ENCODE measurements at regions of chr19 and their contacts with region 1.

Region 1: DNA sequence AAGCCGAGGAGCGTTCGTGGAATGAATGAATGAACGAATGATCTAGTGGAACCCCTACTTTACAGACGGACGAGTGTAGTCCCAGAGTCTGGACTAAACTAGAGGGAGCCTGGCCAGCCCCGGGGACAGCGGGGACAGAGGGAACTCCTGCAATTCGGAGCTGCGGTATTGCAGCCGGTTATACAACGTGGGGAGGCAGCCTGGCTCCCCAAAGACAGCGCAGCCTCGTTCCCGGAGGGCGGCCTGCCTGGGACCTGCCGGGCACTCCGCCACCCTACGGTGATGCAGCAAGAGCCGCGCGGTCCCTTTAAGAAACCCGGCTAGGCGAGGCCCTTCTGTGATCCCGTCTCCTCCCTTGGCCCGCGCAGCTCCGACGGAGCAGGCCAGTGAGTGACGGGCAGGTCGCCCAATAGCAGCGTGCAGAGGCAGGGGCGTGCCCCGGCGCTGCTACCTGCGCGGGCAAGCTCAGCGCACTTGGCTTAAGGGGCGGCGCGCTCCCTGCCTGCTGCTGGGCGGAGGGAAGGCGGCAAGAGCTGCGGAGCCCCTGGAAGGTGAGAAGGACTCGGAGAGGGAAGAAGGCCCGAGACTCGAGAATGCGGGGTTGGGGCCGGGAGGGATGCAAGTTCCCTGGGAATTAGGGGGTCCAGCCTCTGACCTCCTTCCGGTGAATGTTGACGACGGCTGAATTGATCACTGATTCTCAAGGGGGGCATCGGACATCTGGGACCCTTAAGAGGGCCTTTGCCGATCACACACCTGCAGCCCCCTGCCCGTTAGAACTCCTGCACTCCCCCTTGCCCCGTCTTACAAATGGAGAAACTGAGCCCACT is at the start of gene ABCA7:
- DNase-seq: peak; percentile 98
- ATAC-seq: peak; percentile 78
- H3K4me3 ChIP-seq: peak within 1 kb of the TSS; percentile 69 to 90 (median 75)
- H3K4me3 Mint-ChIP-seq: peak within 1 kb of the TSS; percentile 97
- H3K27ac ChIP-seq: peak within 1 kb of the TSS; percentile 81 to 92
- H3K27ac Mint-ChIP-seq: peak within 1 kb of the TSS; percentile 99
- H3K4me1 ChIP-seq: peaks cover 39 to 66% of the 10 kb centered on the region in 2 donors
- H3K4me1 Mint-ChIP-seq: peaks cover 51% of the 10 kb centered on the region
- H3K27me3 ChIP-seq: no peaks in the 10 kb centered on the region
- H3K27me3 Mint-ChIP-seq: no peaks in the 10 kb centered on the region
- CTCF ChIP-seq: no peak
- total RNA-seq, gene ABCA7: 192 and 206 TPM in 2 replicates

Region 2: GRCh38 chr19:883661-884211 is 156.1 kb before region 1 on chr19:
- CTCF ChIA-PET with region 1: no interaction called
- POLR2A ChIA-PET with region 1: no interaction called
- intact Hi-C with region 1: no loop called
- DNase-seq: no peak
- ATAC-seq: peak; percentile 36
- H3K4me3 ChIP-seq: no peak overlapping the region
- H3K4me3 Mint-ChIP-seq: no peak overlapping the region
- H3K27ac ChIP-seq: no peak overlapping the region
- H3K27ac Mint-ChIP-seq: no peak overlapping the region
- H3K4me1 ChIP-seq: peaks cover 0 to 11% of the 10 kb centered on the region in 2 donors
- H3K4me1 Mint-ChIP-seq: no peaks in the 10 kb centered on the region
- H3K27me3 ChIP-seq: no peaks in the 10 kb centered on the region
- H3K27me3 Mint-ChIP-seq: no peaks in the 10 kb centered on the region
- CTCF ChIP-seq: no peak

Region 3: GRCh38 chr19:932402-933215 is 107.3 kb before region 1 on chr19:
- CTCF ChIA-PET with region 1: no interaction called
- POLR2A ChIA-PET with region 1: no interaction called
- intact Hi-C with region 1: no loop called
- DNase-seq: peak; percentile 66
- ATAC-seq: peak; percentile 22
- H3K4me3 ChIP-seq: peak overlapping the region in 1 of 5 experiments; percentile 28
- H3K4me3 Mint-ChIP-seq: peak overlapping the region; percentile 70
- H3K27ac ChIP-seq: peak overlapping the region in 1 of 2 donors; percentile 56
- H3K27ac Mint-ChIP-seq: peak overlapping the region; percentile 84
- H3K4me1 ChIP-seq: peaks cover 24 to 47% of the 10 kb centered on the region in 2 donors
- H3K4me1 Mint-ChIP-seq: peaks cover 32% of the 10 kb centered on the region
- H3K27me3 ChIP-seq: no peaks in the 10 kb centered on the region
- H3K27me3 Mint-ChIP-seq: no peaks in the 10 kb centered on the region
- CTCF ChIP-seq: no peak

Region 4: DNA sequence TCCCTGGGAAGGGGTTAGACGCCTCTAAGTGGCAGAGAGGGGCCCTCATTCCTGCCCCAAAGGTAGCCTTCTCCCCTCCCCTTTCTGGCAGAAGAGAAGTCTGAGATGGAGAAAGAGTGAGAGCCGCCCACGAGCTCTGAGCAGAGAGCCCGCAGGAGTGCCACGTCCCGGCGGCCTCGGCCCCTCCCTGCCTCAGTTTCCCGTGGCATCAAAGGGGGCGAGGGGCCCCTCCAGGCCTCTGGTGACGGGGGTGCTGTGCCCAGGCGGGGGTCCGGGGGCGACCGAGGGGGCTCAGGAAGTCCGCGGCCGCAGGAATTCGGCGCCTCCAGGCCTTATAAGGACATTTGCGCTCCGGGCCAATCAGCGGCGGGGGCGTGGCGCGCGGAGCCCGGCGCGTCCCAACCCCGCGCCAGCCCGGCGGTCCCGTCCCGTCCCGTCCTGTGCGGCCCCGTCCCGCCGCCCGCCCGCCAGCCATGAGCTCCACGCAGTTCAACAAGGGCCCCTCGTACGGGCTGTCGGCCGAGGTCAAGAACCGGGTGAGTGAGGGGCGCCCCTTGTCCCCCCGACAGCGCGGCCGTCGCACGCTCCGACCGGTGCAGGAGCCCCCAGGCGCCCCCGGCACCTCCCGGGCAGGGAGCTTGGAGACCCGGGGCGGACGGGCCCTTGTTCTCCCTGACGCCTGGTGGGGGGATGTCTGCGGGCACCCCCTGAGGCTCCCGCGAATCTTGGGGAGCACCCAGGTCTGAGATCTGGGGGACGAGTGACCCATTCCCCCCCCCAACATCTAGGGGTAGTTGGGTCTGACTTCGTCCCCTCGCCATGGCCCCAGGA is 13.5 kb before region 1 on chr19 and contains the start of gene CNN2:
- CTCF ChIA-PET with region 1: interaction called, 20 read pairs
- POLR2A ChIA-PET with region 1: interaction called, 91 read pairs
- intact Hi-C with region 1: loop called (anchors 1 kb)
- DNase-seq: peak; percentile 81
- ATAC-seq: peak; percentile 57
- H3K4me3 ChIP-seq: peak within 1 kb of the TSS; percentile 60 to 99 (median 87)
- H3K4me3 Mint-ChIP-seq: peak within 1 kb of the TSS; percentile 94
- H3K27ac ChIP-seq: peak within 1 kb of the TSS; percentile 74 to 85
- H3K27ac Mint-ChIP-seq: peak within 1 kb of the TSS; percentile 91
- H3K4me1 ChIP-seq: peaks cover 16 to 37% of the 10 kb centered on the region in 2 donors
- H3K4me1 Mint-ChIP-seq: peaks cover 27% of the 10 kb centered on the region
- H3K27me3 ChIP-seq: no peaks in the 10 kb centered on the region
- H3K27me3 Mint-ChIP-seq: no peaks in the 10 kb centered on the region
- CTCF ChIP-seq: no peak
- total RNA-seq, gene CNN2: 186 and 198 TPM in 2 replicates

Region 5: DNA sequence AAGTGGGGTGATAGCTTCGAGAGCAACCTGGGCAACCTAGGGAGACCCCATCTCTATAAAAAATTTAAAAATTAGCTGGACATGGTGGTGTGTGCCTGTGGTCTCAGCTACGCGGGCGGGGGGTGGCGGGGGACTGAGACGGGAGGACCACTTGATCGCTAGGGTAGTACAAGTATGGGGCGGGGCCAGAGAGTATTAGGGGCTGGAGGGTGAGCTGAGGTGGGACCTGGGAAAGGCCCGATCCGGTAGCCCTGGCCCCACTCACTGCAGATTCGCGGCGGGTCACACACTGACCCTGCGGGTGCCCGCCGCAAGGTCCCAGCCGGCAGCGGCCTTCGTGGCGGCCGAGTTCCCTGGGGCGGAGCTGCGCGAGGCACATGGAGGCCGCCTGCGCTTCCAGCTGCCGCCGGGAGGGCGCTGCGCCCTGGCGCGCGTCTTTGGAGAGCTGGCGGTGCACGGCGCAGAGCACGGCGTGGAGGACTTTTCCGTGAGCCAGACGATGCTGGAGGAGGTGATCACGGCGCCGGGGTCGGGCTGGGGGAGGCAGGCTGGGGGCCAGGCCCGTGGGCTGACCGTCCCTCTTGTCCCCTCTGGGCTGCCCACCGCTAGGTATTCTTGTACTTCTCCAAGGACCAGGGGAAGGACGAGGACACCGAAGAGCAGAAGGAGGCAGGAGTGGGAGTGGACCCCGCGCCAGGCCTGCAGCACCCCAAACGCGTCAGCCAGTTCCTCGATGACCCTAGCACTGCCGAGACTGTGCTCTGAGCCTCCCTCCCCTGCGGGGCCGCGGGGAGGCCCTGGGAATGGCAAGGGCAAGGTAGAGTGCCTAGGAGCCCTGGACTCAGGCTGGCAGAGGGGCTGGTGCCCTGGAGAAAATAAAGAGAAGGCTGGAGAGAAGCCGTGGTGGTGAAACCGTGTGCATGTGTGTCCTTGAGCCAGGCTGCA is 25.1 kb after region 1 on chr19:
- CTCF ChIA-PET with region 1: interaction called, 35 read pairs
- POLR2A ChIA-PET with region 1: interaction called, 32 read pairs
- intact Hi-C with region 1: loop called (anchors 2 kb)
- DNase-seq: peak; percentile 83
- ATAC-seq: peak; percentile 19
- H3K4me3 ChIP-seq: no peak overlapping the region
- H3K4me3 Mint-ChIP-seq: peak overlapping the region; percentile 79
- H3K27ac ChIP-seq: no peak overlapping the region
- H3K27ac Mint-ChIP-seq: peak overlapping the region; percentile 83
- H3K4me1 ChIP-seq: peaks cover 38 to 53% of the 10 kb centered on the region in 2 donors
- H3K4me1 Mint-ChIP-seq: peaks cover 33% of the 10 kb centered on the region
- H3K27me3 ChIP-seq: no peaks in the 10 kb centered on the region
- H3K27me3 Mint-ChIP-seq: no peaks in the 10 kb centered on the region
- CTCF ChIP-seq: peak; percentile 78

Region 6: GRCh38 chr19:1074544-1075283 is 34.9 kb after region 1 on chr19:
- CTCF ChIA-PET with region 1: interaction called, 8 read pairs
- POLR2A ChIA-PET with region 1: interaction called, 29 read pairs
- intact Hi-C with region 1: loop called (anchors 2 kb)
- DNase-seq: peak; percentile 93
- ATAC-seq: peak; percentile 53
- H3K4me3 ChIP-seq: peak overlapping the region in 1 of 5 experiments; percentile 35
- H3K4me3 Mint-ChIP-seq: peak overlapping the region; percentile 66
- H3K27ac ChIP-seq: peak overlapping the region; percentile 7 to 19
- H3K27ac Mint-ChIP-seq: peak overlapping the region; percentile 91
- H3K4me1 ChIP-seq: peaks cover 65 to 90% of the 10 kb centered on the region in 2 donors
- H3K4me1 Mint-ChIP-seq: peaks cover 48% of the 10 kb centered on the region
- H3K27me3 ChIP-seq: no peaks in the 10 kb centered on the region
- H3K27me3 Mint-ChIP-seq: no peaks in the 10 kb centered on the region
- CTCF ChIP-seq: no peak

Region 7: DNA sequence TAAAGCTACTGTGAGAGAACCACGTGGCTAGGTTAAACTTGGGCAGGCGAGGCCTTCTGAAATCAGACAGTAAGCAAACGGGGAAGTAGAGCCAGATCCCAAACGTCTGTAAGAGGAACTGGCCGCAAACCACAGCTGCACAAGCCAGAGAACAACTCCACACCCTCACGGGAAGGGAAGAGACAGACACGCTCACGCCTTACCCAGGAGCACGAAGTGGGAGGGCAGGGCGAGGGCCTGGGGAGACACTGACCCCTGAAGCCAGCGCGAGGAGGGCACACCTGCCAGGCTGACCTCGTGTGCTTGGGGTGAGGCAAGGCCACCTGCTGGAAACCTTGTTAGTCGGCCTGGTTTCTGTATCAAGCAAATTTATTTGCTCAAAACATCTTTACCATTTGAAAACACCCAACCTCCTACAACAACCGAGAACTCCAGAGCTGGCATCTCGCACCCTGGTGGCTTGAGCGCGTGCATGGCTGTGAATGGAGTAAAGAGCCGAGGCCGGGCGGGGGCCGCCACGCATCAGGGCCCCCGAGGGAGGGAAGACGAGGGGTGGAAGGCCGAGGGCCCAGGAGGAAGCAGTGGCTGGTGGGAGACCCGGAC is 48.1 kb after region 1 on chr19:
- CTCF ChIA-PET with region 1: interaction called, 3 read pairs
- POLR2A ChIA-PET with region 1: interaction called, 11 read pairs
- intact Hi-C with region 1: no loop called
- DNase-seq: peak; percentile 86
- ATAC-seq: peak; percentile 61
- H3K4me3 ChIP-seq: peak overlapping the region in 2 of 5 experiments; percentile 1 to 8
- H3K4me3 Mint-ChIP-seq: peak overlapping the region; percentile 69
- H3K27ac ChIP-seq: peak overlapping the region; percentile 29 to 82
- H3K27ac Mint-ChIP-seq: peak overlapping the region; percentile 91
- H3K4me1 ChIP-seq: peaks cover 34 to 42% of the 10 kb centered on the region in 2 donors
- H3K4me1 Mint-ChIP-seq: peaks cover 35% of the 10 kb centered on the region
- H3K27me3 ChIP-seq: no peaks in the 10 kb centered on the region
- H3K27me3 Mint-ChIP-seq: no peaks in the 10 kb centered on the region
- CTCF ChIP-seq: peak; percentile 15

Region 8: DNA sequence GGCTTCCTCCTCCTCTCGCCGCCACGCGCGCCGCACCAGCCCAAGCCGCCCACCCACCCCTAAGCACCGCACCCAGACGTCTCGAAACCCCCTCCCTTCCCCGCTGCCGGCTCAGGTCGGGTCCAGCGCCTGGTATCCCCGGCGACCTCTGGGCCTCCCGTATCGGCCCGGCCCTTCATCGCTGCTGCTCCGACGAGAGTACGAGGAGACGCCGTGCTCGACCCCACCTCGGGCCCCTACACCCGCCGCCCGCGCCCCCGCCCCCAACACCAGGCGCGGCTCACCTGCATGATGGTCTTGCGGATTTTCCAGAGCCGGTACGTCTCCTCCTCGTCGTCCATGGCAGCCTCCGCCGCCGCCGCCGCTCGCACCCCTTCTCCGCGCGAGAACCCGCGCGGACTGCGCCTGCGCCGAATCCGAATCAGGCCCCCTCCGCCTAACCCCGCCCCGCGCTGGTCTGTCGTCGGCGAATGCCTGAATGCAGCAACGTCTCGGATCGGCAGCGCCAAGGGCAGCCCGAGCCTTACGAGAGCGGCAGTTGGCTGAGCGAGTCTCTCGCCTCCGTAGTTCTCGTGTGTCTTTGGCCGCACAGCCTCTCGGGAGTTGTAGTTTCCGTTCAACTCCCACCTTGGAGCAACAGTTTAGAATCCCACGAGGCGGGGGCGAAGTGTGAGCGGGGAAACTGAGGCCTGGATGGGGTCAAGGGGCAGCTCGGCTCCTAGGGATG is 55.3 kb after region 1 on chr19 and contains the start of gene POLR2E:
- CTCF ChIA-PET with region 1: no interaction called
- POLR2A ChIA-PET with region 1: interaction called, 10 read pairs
- intact Hi-C with region 1: loop called (anchors 2 kb)
- DNase-seq: peak; percentile 99
- ATAC-seq: peak; percentile 99
- H3K4me3 ChIP-seq: peak within 1 kb of the TSS; percentile 56 to 86 (median 74)
- H3K4me3 Mint-ChIP-seq: peak within 1 kb of the TSS; percentile 97
- H3K27ac ChIP-seq: peak within 1 kb of the TSS; percentile 27 to 70
- H3K27ac Mint-ChIP-seq: peak within 1 kb of the TSS; percentile 95
- H3K4me1 ChIP-seq: peaks cover 19 to 23% of the 10 kb centered on the region in 2 donors
- H3K4me1 Mint-ChIP-seq: peaks cover 35% of the 10 kb centered on the region
- H3K27me3 ChIP-seq: no peaks in the 10 kb centered on the region
- H3K27me3 Mint-ChIP-seq: no peaks in the 10 kb centered on the region
- CTCF ChIP-seq: no peak
- total RNA-seq, gene POLR2E: 103 and 106 TPM in 2 replicates

Region 9: GRCh38 chr19:1324806-1325567 is 285.1 kb after region 1 on chr19:
- CTCF ChIA-PET with region 1: no interaction called
- POLR2A ChIA-PET with region 1: no interaction called
- intact Hi-C with region 1: no loop called
- DNase-seq: peak; percentile 42
- ATAC-seq: no peak
- H3K4me3 ChIP-seq: peak overlapping the region in 4 of 5 experiments; percentile 8 to 33 (median 25)
- H3K4me3 Mint-ChIP-seq: peak overlapping the region; percentile 39
- H3K27ac ChIP-seq: no peak overlapping the region
- H3K27ac Mint-ChIP-seq: no peak overlapping the region
- H3K4me1 ChIP-seq: peaks cover 12 to 15% of the 10 kb centered on the region in 2 donors
- H3K4me1 Mint-ChIP-seq: peaks cover 2% of the 10 kb centered on the region
- H3K27me3 ChIP-seq: peaks cover 0 to 51% (median 22%) of the 10 kb centered on the region in 4 experiments
- H3K27me3 Mint-ChIP-seq: peaks cover 30% of the 10 kb centered on the region
- CTCF ChIP-seq: no peak

Measured in B cell (primary cell).